ENCODE measurements at regions of chr19 and their contacts with region 1.

Region 1: DNA sequence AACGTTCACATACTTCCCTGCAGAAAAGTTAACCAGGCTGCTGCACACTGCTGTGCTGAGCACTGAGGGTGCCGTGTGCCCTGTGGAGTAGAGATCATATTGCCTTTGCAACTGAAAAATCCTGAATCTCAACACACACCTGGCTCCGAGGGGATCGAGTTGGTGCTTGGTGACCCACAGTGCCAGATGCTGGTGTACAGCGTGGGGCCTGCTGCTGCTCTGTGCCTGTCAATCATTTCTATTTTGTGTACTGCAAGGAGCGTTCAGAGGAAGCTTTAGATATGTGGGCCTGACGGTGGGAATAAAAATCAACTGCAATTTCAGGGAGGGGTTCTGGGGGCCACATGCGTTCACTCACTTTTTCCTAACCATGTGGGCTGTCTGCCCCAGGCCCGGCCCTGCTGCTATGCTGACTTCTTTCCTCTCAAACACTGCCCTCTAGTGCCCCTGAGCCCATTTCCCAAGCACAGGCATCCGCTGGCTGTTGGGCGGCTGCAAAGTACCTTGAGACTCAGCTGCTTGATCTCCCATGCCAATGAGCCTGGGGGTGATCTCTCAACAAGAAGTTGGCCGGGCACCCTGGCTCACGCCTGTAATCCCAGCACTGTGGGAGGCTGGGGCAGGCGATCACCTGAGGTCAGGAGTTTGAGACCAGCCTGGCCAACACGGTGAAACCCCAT is 9.7 kb upstream of the LENG8 start:
- DNase-seq: peak in 1 of 2 experiments; percentile 78
- H3K4me3 ChIP-seq: no peak overlapping the region; a peak in 1 of 8 replicates
- H3K27ac ChIP-seq: no peak overlapping the region
- H3K4me1 ChIP-seq: peaks cover 0 to 27% (median 20%) of the 10 kb centered on the region in 4 experiments; a peak in 6 of 7 replicates
- H3K27me3 ChIP-seq: peaks cover 0 to 2% (median 0%) of the 10 kb centered on the region in 4 experiments; a peak in 1 of 7 replicates
- CTCF ChIP-seq: peak; percentile 78 to 88 (median 82)
- EP300 ChIP-seq: no peak
- POLR2A ChIP-seq: no peak
- RAD21 ChIP-seq: peak; percentile 76 to 83

Region 2: DNA sequence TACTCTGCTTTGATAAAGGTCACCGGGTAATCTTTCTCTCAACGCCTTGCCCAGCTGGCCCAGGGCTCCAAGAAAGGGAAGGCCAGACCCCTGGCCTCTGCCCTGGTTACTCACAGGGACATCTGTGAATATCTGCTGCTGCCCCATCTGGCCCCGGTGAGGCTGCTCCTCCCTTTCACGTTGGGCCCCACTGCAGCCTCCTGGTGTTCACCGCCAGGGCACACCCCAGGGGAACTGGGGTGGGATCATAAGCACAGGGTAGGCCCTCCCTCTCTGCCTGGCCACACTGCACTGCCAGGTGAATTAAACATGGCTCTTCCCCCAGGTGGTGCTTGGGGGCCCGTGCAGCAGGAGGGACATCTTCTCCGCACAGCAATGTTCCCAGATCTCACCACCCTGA is 87.3 kb before region 1 on chr19:
- CTCF ChIA-PET with region 1: interaction called, 13 read pairs
- POLR2A ChIA-PET with region 1: no interaction called
- DNase-seq: no peak
- H3K4me3 ChIP-seq: no peak overlapping the region
- H3K27ac ChIP-seq: no peak overlapping the region
- H3K4me1 ChIP-seq: no peaks in the 10 kb centered on the region
- H3K27me3 ChIP-seq: no peaks in the 10 kb centered on the region
- CTCF ChIP-seq: no peak
- EP300 ChIP-seq: no peak
- POLR2A ChIP-seq: no peak
- RAD21 ChIP-seq: no peak

Region 3: DNA sequence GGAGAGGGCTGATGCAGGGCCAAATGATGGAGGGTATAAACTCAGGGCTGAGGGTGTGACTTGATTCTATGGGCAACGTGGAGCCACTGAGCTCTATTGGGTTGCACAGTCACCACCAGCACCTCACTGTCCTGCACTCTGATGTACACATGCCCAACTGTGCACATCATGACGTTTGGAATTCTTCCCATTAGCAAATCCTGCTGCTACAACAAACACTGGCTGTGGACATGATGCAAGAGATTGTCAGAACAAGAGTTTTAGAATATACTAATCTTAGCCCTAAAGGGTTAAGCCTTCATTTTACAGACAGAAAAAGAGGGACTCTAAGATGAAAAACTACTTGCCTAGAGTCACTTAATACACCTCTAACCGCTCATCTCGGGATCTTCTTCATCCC is 26.4 kb before region 1 on chr19:
- CTCF ChIA-PET with region 1: interaction called, 27 read pairs
- POLR2A ChIA-PET with region 1: interaction called, 133 read pairs
- DNase-seq: no peak
- H3K4me3 ChIP-seq: no peak overlapping the region
- H3K27ac ChIP-seq: no peak overlapping the region
- H3K4me1 ChIP-seq: peaks cover 4 to 20% (median 8%) of the 10 kb centered on the region in 4 experiments
- H3K27me3 ChIP-seq: peaks cover 6 to 25% (median 21%) of the 10 kb centered on the region in 4 experiments
- CTCF ChIP-seq: no peak
- EP300 ChIP-seq: no peak
- POLR2A ChIP-seq: no peak
- RAD21 ChIP-seq: no peak

Region 4: DNA sequence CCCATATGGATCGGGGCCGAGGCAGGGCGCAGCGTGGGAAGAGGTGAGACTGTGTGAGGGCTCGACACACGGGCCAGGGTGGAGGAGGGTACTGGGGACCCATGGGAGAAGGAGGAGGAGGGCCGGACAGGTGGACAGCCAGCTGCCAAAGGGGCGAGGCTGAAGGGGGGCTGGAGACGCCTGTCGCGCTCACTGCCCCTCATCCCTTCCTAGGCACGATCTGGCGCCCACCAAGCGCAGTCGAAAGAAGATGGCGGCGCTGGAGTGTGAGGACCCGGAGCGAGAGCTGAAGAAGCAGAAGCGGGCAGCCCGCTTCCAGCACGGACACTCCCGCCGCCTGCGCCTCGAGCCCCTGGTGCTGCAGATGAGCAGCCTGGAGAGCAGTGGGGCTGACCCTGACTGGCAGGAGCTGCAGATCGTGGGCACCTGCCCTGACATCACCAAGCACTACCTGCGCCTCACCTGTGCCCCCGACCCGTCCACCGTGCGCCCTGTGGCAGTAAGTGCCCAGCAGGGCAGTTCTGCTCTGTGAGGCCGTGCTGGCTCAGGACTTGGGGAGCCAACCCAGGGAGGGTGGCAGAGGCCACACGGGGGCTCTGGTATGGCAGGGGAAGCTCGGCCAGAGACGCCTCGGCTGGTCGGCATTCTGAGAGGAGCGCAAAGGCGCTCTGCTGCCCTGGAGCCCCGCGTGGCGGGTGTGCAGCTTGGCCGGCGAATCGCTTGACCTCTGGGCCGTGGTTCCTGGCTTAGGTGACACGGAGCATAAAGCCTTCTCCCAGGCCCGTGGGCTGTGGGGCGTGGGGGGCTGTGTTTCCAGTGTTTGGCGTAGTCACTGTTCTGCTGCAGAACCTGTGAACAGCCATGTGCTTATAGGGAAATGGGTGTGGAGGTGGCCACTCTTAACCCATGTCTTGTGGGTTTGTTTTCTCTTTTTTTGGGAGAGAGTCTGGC is 17.4 kb after region 1 on chr19:
- CTCF ChIA-PET with region 1: interaction called, 19 read pairs
- POLR2A ChIA-PET with region 1: interaction called, 29 read pairs
- DNase-seq: no peak
- H3K4me3 ChIP-seq: no peak overlapping the region
- H3K27ac ChIP-seq: no peak overlapping the region
- H3K4me1 ChIP-seq: no peaks in the 10 kb centered on the region; a peak in 2 of 7 replicates
- H3K27me3 ChIP-seq: no peaks in the 10 kb centered on the region
- CTCF ChIP-seq: no peak
- EP300 ChIP-seq: no peak
- POLR2A ChIP-seq: no peak
- RAD21 ChIP-seq: no peak

Region 5: GRCh38 chr19:54463531-54464043 is 24.3 kb after region 1 on chr19 and contains the start of gene LENG9:
- CTCF ChIA-PET with region 1: interaction called, 13 read pairs
- POLR2A ChIA-PET with region 1: interaction called, 17 read pairs
- DNase-seq: peak; percentile 92 to 98
- H3K4me3 ChIP-seq: peak within 1 kb of the TSS; percentile 68 to 87 (median 80)
- H3K27ac ChIP-seq: peak within 1 kb of the TSS; percentile 86
- H3K4me1 ChIP-seq: peaks cover 0 to 8% (median 5%) of the 10 kb centered on the region in 4 experiments; a peak in 5 of 7 replicates
- H3K27me3 ChIP-seq: peaks cover 0 to 11% (median 5%) of the 10 kb centered on the region in 4 experiments; a peak in 5 of 7 replicates
- CTCF ChIP-seq: no peak
- EP300 ChIP-seq: no peak
- POLR2A ChIP-seq: peak; percentile 43 to 57; a peak in 2 of 3 replicates
- RAD21 ChIP-seq: no peak
- total RNA-seq, gene LENG9: 3.9 and 4.0 TPM in 2 replicates

Region 6: GRCh38 chr19:54561840-54562239 is 122.5 kb after region 1 on chr19:
- CTCF ChIA-PET with region 1: no interaction called
- POLR2A ChIA-PET with region 1: no interaction called
- DNase-seq: no peak
- H3K4me3 ChIP-seq: no peak overlapping the region
- H3K27ac ChIP-seq: no peak overlapping the region
- H3K4me1 ChIP-seq: no peaks in the 10 kb centered on the region
- H3K27me3 ChIP-seq: no peaks in the 10 kb centered on the region
- CTCF ChIP-seq: no peak
- EP300 ChIP-seq: no peak
- POLR2A ChIP-seq: no peak
- RAD21 ChIP-seq: no peak

Measured in H1 (cell line).